ENCODE measurements at regions of chr1 and their contacts with region 1.

Region 1: GRCh38 chr1:193602705-193603104 is 416.3 kb upstream of the B3GALT2 start:
- DNase-seq: no peak
- H3K4me3 Mint-ChIP-seq: no peak overlapping the region
- H3K27ac Mint-ChIP-seq: no peak overlapping the region
- H3K4me1 Mint-ChIP-seq: peaks cover 11% of the 10 kb centered on the region
- H3K27me3 Mint-ChIP-seq: no peaks in the 10 kb centered on the region

Region 2: DNA sequence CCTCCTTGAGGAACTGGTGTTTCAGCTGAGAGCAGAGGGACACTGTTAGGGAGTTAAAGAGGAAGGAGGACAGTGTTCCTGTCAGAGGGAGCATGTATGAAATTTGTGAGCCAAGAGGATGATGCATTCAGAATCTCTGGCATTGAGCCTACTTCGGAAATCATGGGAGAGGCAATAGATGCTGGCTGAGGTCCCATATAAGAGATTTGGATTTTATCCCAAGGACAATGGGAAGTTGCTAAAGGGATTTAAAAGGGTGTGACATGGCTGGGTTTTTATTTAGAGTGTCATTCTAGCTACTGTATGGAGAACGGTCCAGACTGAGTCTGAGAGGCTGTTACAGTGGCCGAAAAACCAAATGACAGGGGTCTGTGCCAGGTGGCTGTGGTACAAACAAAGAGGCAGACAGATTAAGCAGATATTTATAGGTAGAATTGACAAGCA is 13.1 kb before region 1 on chr1:
- CTCF ChIA-PET with region 1: interaction called, 13 read pairs
- POLR2A ChIA-PET with region 1: no interaction called
- DNase-seq: no peak
- H3K4me3 Mint-ChIP-seq: no peak overlapping the region
- H3K27ac Mint-ChIP-seq: no peak overlapping the region
- H3K4me1 Mint-ChIP-seq: peaks cover 19% of the 10 kb centered on the region
- H3K27me3 Mint-ChIP-seq: peaks cover 5% of the 10 kb centered on the region

Region 3: GRCh38 chr1:193884848-193885558 is 282.3 kb after region 1 on chr1:
- CTCF ChIA-PET with region 1: no interaction called
- POLR2A ChIA-PET with region 1: no interaction called
- DNase-seq: no peak
- H3K4me3 Mint-ChIP-seq: no peak overlapping the region
- H3K27ac Mint-ChIP-seq: no peak overlapping the region
- H3K4me1 Mint-ChIP-seq: no peaks in the 10 kb centered on the region
- H3K27me3 Mint-ChIP-seq: no peaks in the 10 kb centered on the region

Measured in activated CD4-positive, alpha-beta T cell treated with anti-CD3 and anti-CD28 coated beads, Interleukin-2, amount 10 ng/mL, durations not matched to agents 7 days and 5 days (primary cell).